ENCODE measurements at regions of chr4 and their contacts with region 1.

Region 1: GRCh38 chr4:174318829-174319764 is 35.4 kb downstream of the CEP44 start:
- DNase-seq: peak; percentile 46
- ATAC-seq: peak; percentile 31; the same call in 1 of the 2 replicates
- H3K4me3 ChIP-seq: no peak overlapping the region
- H3K27ac ChIP-seq: no peak overlapping the region
- H3K4me1 ChIP-seq: peaks cover 2% of the 10 kb centered on the region; the same call in 1 of the 2 replicates
- H3K27me3 ChIP-seq: no peaks in the 10 kb centered on the region
- CTCF ChIP-seq: peak; percentile 80
- POLR2A ChIP-seq: no peak
- RAD21 ChIP-seq: peak; percentile 80

Region 2: GRCh38 chr4:173505924-173506518 is 813.1 kb before region 1 on chr4:
- CTCF ChIA-PET with region 1: interaction called, 3 read pairs
- POLR2A ChIA-PET with region 1: no interaction called
- dilution Hi-C with region 1: no loop called
- in situ Hi-C with region 1: loop called (anchors 25 kb)
- intact Hi-C with region 1: loop called (anchors 1 kb)
- DNase-seq: peak; percentile 45
- ATAC-seq: peak; percentile 96
- H3K4me3 ChIP-seq: no peak overlapping the region
- H3K27ac ChIP-seq: no peak overlapping the region
- H3K4me1 ChIP-seq: no peaks in the 10 kb centered on the region
- H3K27me3 ChIP-seq: peaks cover 82% of the 10 kb centered on the region
- CTCF ChIP-seq: peak; percentile 79
- POLR2A ChIP-seq: no peak
- RAD21 ChIP-seq: peak; percentile 85

Region 3: DNA sequence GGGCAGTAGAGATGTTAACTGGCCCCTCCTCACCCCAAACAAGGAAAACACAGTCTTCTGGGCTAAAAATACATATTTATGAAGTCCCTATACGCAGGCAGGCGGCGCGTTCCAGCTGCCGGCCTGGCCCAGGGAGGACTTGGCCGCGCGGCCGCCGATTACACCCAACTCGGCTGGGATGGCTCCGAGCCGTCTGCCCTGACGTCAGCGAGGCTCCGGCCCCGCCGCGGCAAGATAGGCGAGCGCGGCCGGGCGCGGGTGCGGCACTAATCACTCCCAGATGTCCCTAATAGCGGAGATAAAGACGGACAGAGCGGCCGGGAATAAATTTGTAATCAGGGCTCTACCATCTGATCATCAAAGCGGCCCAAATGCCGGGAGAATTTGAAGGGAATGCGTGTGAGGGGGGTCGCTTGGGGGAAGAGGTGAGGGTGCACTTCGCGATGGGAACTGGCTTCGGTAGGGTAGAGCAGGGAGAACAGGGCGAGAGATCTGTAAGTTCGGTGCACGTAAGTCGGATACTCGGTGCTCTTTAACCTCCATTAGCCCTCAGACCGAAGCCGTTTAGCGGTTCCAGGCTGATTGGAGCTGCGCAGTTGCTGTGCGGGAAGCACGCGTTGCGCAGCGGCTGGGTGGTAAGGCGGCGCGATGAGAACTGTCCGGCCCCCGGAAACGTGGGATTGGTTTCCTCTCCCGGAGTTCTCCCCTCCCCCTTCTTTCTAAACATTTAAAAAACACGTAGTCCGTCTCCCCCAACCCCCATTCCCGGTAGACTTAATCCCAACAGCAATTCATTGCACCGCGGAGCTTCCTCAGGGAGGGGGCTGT is 796.8 kb before region 1 on chr4:
- CTCF ChIA-PET with region 1: no interaction called
- POLR2A ChIA-PET with region 1: no interaction called
- dilution Hi-C with region 1: no loop called
- in situ Hi-C with region 1: loop called (anchors 25 kb)
- intact Hi-C with region 1: loop called (anchors 5 kb)
- DNase-seq: peak; percentile 85
- ATAC-seq: peak; percentile 96
- H3K4me3 ChIP-seq: peak overlapping the region; percentile 35
- H3K27ac ChIP-seq: peak overlapping the region; percentile 42; the same call in 1 of the 2 replicates
- H3K4me1 ChIP-seq: no peaks in the 10 kb centered on the region
- H3K27me3 ChIP-seq: peaks cover 76% of the 10 kb centered on the region
- CTCF ChIP-seq: no peak
- POLR2A ChIP-seq: no peak
- RAD21 ChIP-seq: no peak

Region 4: GRCh38 chr4:173990126-173990868 is 328.8 kb before region 1 on chr4:
- CTCF ChIA-PET with region 1: interaction called, 4 read pairs
- POLR2A ChIA-PET with region 1: no interaction called
- dilution Hi-C with region 1: no loop called
- in situ Hi-C with region 1: no loop called
- intact Hi-C with region 1: loop called (anchors 1 kb)
- DNase-seq: peak; percentile 46
- ATAC-seq: peak; percentile 83
- H3K4me3 ChIP-seq: no peak overlapping the region
- H3K27ac ChIP-seq: no peak overlapping the region
- H3K4me1 ChIP-seq: no peaks in the 10 kb centered on the region
- H3K27me3 ChIP-seq: peaks cover 2% of the 10 kb centered on the region
- CTCF ChIP-seq: peak; percentile 56
- POLR2A ChIP-seq: no peak
- RAD21 ChIP-seq: peak; percentile 69

Region 5: DNA sequence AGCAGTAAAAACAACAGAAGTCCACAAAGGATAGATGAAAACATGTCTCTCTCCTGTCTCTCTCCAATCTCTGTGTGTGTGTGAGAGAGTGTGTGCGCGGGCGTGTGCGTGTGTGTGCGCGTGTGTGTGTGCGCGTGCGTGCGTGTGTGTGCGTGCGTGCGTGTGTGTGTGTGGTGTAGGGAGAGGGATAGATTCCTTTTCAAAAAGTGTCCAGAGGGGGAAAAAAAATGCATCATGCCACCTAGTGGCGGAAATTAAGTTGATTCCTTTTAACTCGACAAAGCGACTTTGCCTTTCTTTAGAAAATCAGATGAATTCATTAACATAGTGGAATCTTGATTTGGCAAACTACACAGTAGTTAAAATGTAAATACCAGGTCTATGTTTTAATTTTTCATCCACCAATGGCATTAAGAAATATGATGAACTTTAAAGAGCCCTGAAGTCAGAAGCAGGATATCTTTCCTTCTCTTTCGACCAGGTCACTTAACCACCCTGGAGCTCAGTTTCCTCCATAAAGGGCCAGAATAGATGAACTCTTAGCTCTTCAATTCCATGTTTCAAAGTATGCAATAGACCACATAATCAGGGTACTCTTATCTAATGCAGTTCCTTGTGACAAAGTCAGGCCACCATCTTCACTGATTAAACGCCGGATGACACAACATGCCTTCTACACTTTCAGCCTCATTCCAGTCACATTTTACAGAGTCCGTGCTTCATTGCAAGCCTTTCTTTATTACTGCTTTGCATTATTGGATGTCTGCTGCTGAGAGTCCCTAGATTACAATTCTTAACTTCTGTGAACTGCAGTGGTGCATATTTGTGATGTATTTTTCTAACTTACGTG is 198.4 kb before region 1 on chr4:
- CTCF ChIA-PET with region 1: no interaction called
- POLR2A ChIA-PET with region 1: no interaction called
- dilution Hi-C with region 1: no loop called
- in situ Hi-C with region 1: no loop called
- intact Hi-C with region 1: loop called (anchors 10 kb)
- DNase-seq: peak; percentile 72
- ATAC-seq: peak; percentile 84
- H3K4me3 ChIP-seq: peak overlapping the region; percentile 54
- H3K27ac ChIP-seq: no peak overlapping the region
- H3K4me1 ChIP-seq: no peaks in the 10 kb centered on the region
- H3K27me3 ChIP-seq: no peaks in the 10 kb centered on the region; the same call in 1 of the 2 replicates
- CTCF ChIP-seq: peak; percentile 61
- POLR2A ChIP-seq: no peak
- RAD21 ChIP-seq: peak; percentile 52

Region 6: GRCh38 chr4:174156239-174156826 is 162.8 kb before region 1 on chr4:
- CTCF ChIA-PET with region 1: no interaction called
- POLR2A ChIA-PET with region 1: no interaction called
- dilution Hi-C with region 1: no loop called
- in situ Hi-C with region 1: no loop called
- intact Hi-C with region 1: loop called (anchors 2 kb)
- DNase-seq: peak; percentile 38
- ATAC-seq: peak; percentile 67
- H3K4me3 ChIP-seq: no peak overlapping the region
- H3K27ac ChIP-seq: no peak overlapping the region
- H3K4me1 ChIP-seq: no peaks in the 10 kb centered on the region
- H3K27me3 ChIP-seq: peaks cover 6% of the 10 kb centered on the region
- CTCF ChIP-seq: peak; percentile 54
- POLR2A ChIP-seq: no peak
- RAD21 ChIP-seq: peak; percentile 52

Region 7: DNA sequence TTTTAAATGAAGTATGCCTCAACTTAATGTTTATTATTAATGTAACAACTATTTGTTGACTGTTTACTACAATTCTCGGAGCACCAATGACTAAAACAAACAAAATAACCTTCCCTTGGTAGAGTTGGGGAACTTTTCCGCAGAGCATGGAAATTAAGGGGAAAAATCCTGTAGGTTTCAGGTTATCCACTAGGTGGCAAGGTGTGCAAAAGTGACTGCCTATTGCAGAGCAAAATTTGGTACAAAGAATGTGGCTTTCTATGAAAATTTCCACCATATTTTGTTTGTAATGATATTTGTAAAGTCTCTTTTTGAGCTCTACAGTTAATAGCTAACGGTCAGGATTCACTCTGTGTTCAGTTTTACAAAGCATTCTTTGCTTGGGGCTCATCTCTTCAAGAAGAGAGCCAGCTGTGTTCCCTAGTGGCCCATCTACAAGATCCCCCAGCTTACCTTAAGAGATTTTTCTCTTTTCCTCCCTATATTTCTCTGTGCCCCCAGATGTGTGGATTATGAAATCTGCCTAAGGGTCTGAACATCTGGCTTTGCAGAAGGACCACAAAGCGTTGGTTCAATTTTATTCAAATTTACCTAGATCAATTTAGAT is 96.7 kb before region 1 on chr4:
- CTCF ChIA-PET with region 1: interaction called, 7 read pairs
- POLR2A ChIA-PET with region 1: no interaction called
- dilution Hi-C with region 1: no loop called
- in situ Hi-C with region 1: loop called (anchors 10 kb)
- intact Hi-C with region 1: loop called (anchors 1 kb)
- DNase-seq: peak; percentile 29
- ATAC-seq: 0 out of 2 replicates have a peak, but pooled peaks have one; percentile 40
- H3K4me3 ChIP-seq: no peak overlapping the region
- H3K27ac ChIP-seq: no peak overlapping the region
- H3K4me1 ChIP-seq: no peaks in the 10 kb centered on the region; the same call in 1 of the 2 replicates
- H3K27me3 ChIP-seq: peaks cover 16% of the 10 kb centered on the region
- CTCF ChIP-seq: peak; percentile 57
- POLR2A ChIP-seq: no peak
- RAD21 ChIP-seq: peak; percentile 51